Endothelial cell of umbilical vein (primary cell): ENCODE measurements at regions of chr2 and their contacts with region 1.

Region 1: GRCh38 chr2:238841542-238842164 is 6.2 kb upstream of the TWIST2 start:
- DNase-seq: no peak
- H3K4me3 ChIP-seq: no peak overlapping the region
- H3K27ac ChIP-seq: no peak overlapping the region
- H3K4me1 ChIP-seq: no peaks in the 10 kb centered on the region
- H3K27me3 ChIP-seq: peaks cover 13 to 17% of the 10 kb centered on the region in 2 experiments
- CTCF ChIP-seq: no peak
- POLR2A ChIP-seq: no peak

Region 2: GRCh38 chr2:238875101-238875470 is 33.4 kb after region 1 on chr2:
- CTCF ChIA-PET with region 1: interaction called, 14 read pairs
- POLR2A ChIA-PET with region 1: no interaction called
- dilution Hi-C with region 1: no loop called
- intact Hi-C with region 1: no loop called
- DNase-seq: no peak
- H3K4me3 ChIP-seq: no peak overlapping the region
- H3K27ac ChIP-seq: no peak overlapping the region
- H3K4me1 ChIP-seq: no peaks in the 10 kb centered on the region
- H3K27me3 ChIP-seq: no peaks in the 10 kb centered on the region
- CTCF ChIP-seq: no peak
- POLR2A ChIP-seq: no peak

Region 3: DNA sequence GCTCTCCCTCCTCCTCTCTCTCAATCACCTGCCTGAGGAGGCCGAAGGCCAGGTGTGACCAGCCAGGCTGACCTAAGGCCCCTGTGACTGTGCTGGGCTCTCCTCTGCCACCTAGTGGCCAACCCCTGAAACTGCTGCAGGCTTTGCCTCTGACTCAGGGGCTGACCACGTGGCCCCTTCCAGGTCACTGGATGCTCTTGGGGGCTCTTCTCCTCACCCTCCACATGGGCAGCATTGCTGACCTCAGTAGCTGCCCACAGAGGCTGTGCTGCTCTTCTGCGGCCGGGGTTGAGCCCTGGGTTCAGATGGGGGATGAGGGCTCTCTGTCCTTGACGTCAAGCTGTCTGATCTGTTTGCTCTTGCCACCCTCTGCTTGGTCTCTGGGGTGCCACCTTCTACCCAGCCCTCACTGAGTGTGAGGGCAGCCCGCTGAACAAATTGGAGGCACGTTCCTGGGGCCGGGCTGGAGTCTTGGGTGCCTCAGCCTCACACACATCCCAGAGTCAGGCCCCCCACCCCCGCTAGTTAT is 129.0 kb after region 1 on chr2:
- CTCF ChIA-PET with region 1: no interaction called
- POLR2A ChIA-PET with region 1: no interaction called
- dilution Hi-C with region 1: no loop called
- intact Hi-C with region 1: loop called (anchors 1 kb)
- DNase-seq: peak; percentile 66
- H3K4me3 ChIP-seq: no peak overlapping the region
- H3K27ac ChIP-seq: no peak overlapping the region
- H3K4me1 ChIP-seq: peaks cover 20% of the 10 kb centered on the region
- H3K27me3 ChIP-seq: no peaks in the 10 kb centered on the region
- CTCF ChIP-seq: peak; percentile 96 to 99
- POLR2A ChIP-seq: no peak

Region 4: GRCh38 chr2:239106314-239106908 is 264.8 kb after region 1 on chr2:
- CTCF ChIA-PET with region 1: no interaction called
- POLR2A ChIA-PET with region 1: no interaction called
- dilution Hi-C with region 1: no loop called
- intact Hi-C with region 1: loop called (anchors 1 kb)
- DNase-seq: peak; percentile 59
- H3K4me3 ChIP-seq: no peak overlapping the region
- H3K27ac ChIP-seq: no peak overlapping the region
- H3K4me1 ChIP-seq: no peaks in the 10 kb centered on the region
- H3K27me3 ChIP-seq: no peaks in the 10 kb centered on the region
- CTCF ChIP-seq: peak; percentile 42 to 80
- POLR2A ChIP-seq: no peak